Ascending aorta (tissue), 2 donors: ENCODE measurements at regions of chr3 and their contacts with region 1.

Region 1: GRCh38 chr3:159763602-159764489 is 224.8 kb upstream of the IL12A start:
- DNase-seq: peak; percentile 39 to 90
- H3K4me3 ChIP-seq: peak overlapping the region; percentile 69 to 93
- H3K27ac ChIP-seq: peak overlapping the region; percentile 99 to 100
- H3K4me1 ChIP-seq: peaks cover 3 to 27% of the 10 kb centered on the region in 2 donors
- H3K27me3 ChIP-seq: no peaks in the 10 kb centered on the region
- CTCF ChIP-seq: peak in 2 of 3 experiments; percentile 15 to 55

Region 2: DNA sequence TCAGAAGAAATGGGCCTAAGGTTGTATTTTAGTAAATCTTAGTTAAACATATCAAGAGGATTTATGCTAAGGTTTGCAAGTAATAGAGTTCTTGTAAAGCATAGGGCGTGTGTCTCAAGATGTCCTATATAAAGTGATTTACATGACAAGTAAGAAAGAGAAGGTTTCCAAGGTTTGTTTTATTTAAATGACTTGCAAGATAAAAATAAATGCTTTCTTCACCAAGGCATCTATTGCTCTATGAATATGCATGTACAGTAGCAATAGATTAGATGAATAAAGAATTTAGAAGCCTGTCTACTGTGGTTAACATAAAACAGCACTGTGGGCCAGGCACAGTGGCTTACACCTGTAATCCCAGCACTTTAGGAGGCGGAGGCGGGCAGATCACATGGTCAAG is 241.6 kb before region 1 on chr3:
- intact Hi-C with region 1: no loop called
- DNase-seq: no peak
- H3K4me3 ChIP-seq: no peak overlapping the region
- H3K27ac ChIP-seq: no peak overlapping the region
- H3K4me1 ChIP-seq: no peaks in the 10 kb centered on the region
- H3K27me3 ChIP-seq: no peaks in the 10 kb centered on the region
- CTCF ChIP-seq: no peak

Region 3: DNA sequence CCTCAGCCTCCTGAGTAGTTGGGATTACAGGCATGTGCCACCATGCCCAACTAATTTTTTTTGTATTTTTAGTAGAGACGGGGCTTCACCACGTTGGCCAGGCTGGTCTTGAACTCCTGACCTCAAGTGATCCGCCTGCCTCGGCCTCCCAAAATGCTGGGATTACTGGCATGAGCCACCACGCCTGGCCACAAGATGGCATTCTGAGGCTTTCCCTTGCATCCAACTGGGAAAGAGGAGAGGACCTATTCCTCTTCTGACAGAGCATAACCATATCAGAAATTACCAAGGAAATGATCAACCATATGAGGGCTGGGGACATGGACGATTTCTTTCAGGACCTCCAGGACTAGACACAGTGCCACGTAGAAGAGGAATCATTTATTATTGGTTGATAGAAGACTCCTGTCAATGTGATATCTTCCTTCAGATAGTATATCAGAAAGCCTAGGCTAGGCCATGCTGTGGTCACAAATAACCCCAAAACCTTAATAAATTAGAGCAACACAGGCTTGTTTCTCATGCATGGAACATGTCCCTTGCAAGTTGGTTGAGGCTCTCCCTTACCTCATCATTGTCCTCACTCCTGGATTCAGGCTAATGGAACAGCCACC is 147.5 kb before region 1 on chr3:
- intact Hi-C with region 1: loop called (anchors 2 kb)
- DNase-seq: no peak
- H3K4me3 ChIP-seq: no peak overlapping the region
- H3K27ac ChIP-seq: no peak overlapping the region
- H3K4me1 ChIP-seq: no peaks in the 10 kb centered on the region
- H3K27me3 ChIP-seq: no peaks in the 10 kb centered on the region
- CTCF ChIP-seq: peak; percentile 35 to 69 (median 46)

Region 4: GRCh38 chr3:159732172-159733111 is 31.4 kb before region 1 on chr3:
- intact Hi-C with region 1: loop called (anchors 1 kb)
- DNase-seq: no peak
- H3K4me3 ChIP-seq: peak overlapping the region; percentile 39 to 52
- H3K27ac ChIP-seq: peak overlapping the region; percentile 45 to 50
- H3K4me1 ChIP-seq: peaks cover 0 to 9% of the 10 kb centered on the region in 2 donors
- H3K27me3 ChIP-seq: no peaks in the 10 kb centered on the region
- CTCF ChIP-seq: no peak

Region 5: GRCh38 chr3:159796744-159797143 is 32.9 kb after region 1 on chr3:
- intact Hi-C with region 1: loop called (anchors 1 kb)
- DNase-seq: no peak
- H3K4me3 ChIP-seq: no peak overlapping the region
- H3K27ac ChIP-seq: peak overlapping the region; percentile 86 to 89
- H3K4me1 ChIP-seq: peaks cover 9 to 77% of the 10 kb centered on the region in 2 donors
- H3K27me3 ChIP-seq: no peaks in the 10 kb centered on the region
- CTCF ChIP-seq: no peak

Region 6: GRCh38 chr3:159804726-159805410 is 41.0 kb after region 1 on chr3:
- intact Hi-C with region 1: loop called (anchors 1 kb)
- DNase-seq: peak in 1 of 2 donors; percentile 87
- H3K4me3 ChIP-seq: peak overlapping the region in 1 of 2 donors; percentile 26
- H3K27ac ChIP-seq: peak overlapping the region; percentile 59 to 73
- H3K4me1 ChIP-seq: peaks cover 3 to 40% of the 10 kb centered on the region in 2 donors
- H3K27me3 ChIP-seq: no peaks in the 10 kb centered on the region
- CTCF ChIP-seq: peak; percentile 79 to 87 (median 85)

Region 7: GRCh38 chr3:159852821-159853505 is 89.1 kb after region 1 on chr3:
- intact Hi-C with region 1: loop called (anchors 1 kb)
- DNase-seq: peak; percentile 11 to 72
- H3K4me3 ChIP-seq: peak overlapping the region in 1 of 2 donors; percentile 49
- H3K27ac ChIP-seq: peak overlapping the region; percentile 78 to 80
- H3K4me1 ChIP-seq: peaks cover 10 to 39% of the 10 kb centered on the region in 2 donors
- H3K27me3 ChIP-seq: no peaks in the 10 kb centered on the region
- CTCF ChIP-seq: no peak